AG04450 (cell line): ENCODE measurements at regions of chrX and their contacts with region 1.

Region 1: DNA sequence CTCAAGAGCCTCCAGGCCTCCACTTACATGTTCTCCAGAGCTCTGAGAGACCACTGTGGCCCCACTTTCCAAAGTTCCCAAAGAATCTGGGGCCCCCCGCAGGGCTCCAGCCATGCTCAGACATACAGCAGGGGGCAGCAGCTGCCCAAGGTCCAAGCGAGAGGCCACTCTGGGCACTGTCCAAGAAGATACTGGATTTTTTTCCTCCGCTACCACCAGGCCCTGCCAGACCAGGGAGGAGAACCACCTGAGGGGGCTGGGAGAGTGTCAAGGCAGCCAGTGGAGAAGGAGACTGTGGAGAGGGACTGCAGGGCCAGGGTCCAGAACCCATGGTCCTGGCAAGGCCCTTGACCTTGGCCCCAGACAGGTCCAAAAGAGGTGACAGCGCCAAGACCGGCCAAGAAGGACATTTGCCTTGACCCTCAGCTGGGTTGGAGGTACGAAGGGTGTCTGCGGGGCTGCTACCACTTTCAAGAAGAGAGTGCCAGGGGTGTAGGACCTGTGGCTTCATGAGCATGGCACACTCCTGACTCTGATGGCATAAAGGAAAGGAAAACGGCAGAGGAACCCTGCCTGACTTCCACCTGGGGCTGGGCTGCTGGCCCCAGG is 5.3 kb downstream of the EMD start:
- DNase-seq: no peak
- H3K4me3 ChIP-seq: no peak overlapping the region
- H3K27ac ChIP-seq: no peak overlapping the region
- H3K27me3 ChIP-seq: no peaks in the 10 kb centered on the region
- CTCF ChIP-seq: peak; percentile 53

Region 2: GRCh38 chrX:154298312-154298711 is 86.1 kb before region 1 on chrX:
- CTCF ChIA-PET with region 1: no interaction called
- POLR2A ChIA-PET with region 1: no interaction called
- DNase-seq: no peak
- H3K4me3 ChIP-seq: no peak overlapping the region
- H3K27ac ChIP-seq: no peak overlapping the region
- H3K27me3 ChIP-seq: peaks cover 2% of the 10 kb centered on the region
- CTCF ChIP-seq: no peak

Region 3: GRCh38 chrX:154370882-154371770 is 13.3 kb before region 1 on chrX:
- CTCF ChIA-PET with region 1: interaction called, 17 read pairs
- POLR2A ChIA-PET with region 1: interaction called, 16 read pairs
- DNase-seq: peak; percentile 78
- H3K4me3 ChIP-seq: peak overlapping the region; percentile 92
- H3K27ac ChIP-seq: peak overlapping the region; percentile 57
- H3K27me3 ChIP-seq: no peaks in the 10 kb centered on the region
- CTCF ChIP-seq: no peak

Region 4: DNA sequence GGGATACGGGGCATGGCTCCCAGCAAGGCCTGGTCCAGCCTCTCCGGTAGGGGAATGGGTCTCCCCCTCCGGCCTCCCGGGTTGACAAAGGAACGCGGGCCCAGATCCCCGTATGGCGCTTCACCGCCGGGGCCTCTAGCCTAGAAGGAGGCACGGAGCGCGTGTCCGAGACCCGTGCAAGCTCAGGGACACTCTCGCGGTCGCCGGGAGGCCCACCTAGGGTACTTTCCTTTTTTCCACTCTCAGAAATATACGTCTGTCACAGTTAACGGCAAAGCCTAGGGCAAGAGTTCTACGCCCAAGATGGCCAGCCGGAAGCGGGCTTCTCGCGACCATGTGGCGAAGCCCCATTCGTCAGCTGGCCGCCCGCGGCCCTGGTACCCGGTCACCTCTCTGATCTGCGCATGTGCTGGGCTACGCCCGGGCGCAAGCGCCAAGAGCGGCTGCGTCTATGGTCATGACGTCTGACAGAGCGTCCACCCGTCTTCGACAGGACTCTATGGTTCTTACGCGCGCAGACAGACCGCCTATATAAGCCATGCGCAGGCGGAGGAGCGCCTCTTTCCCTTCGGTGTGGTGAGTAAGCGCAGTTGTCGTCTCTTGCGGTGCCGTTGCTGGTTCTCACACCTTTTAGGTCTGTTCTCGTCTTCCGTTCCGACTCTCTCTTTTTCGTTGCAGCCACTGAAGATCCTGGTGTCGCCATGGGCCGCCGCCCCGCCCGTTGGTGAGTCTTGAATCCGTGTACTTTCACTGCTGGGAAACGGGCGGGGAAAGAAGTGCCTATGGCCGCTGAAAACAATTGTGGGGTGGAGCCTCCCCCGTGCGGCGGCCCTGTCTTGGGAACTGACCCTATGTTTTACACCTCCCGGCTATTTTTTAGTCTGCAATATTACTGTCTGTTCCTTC is 13.7 kb after region 1 on chrX and contains the start of gene RPL10:
- CTCF ChIA-PET with region 1: no interaction called
- POLR2A ChIA-PET with region 1: no interaction called
- DNase-seq: peak; percentile 94
- H3K4me3 ChIP-seq: peak within 1 kb of the TSS; percentile 84
- H3K27ac ChIP-seq: peak within 1 kb of the TSS; percentile 98
- H3K27me3 ChIP-seq: no peaks in the 10 kb centered on the region
- CTCF ChIP-seq: no peak
- polyA plus RNA-seq, gene RPL10: 3,912 and 4,828 TPM in 2 replicates